Mammary epithelial cell (primary cell): ENCODE measurements at regions of chr3 and their contacts with region 1.

Region 1: GRCh38 chr3:99114565-99115291 is 213.2 kb upstream of the DCBLD2 start:
- DNase-seq: peak; percentile 60
- H3K4me3 ChIP-seq: no peak overlapping the region
- H3K27ac ChIP-seq: no peak overlapping the region
- H3K4me1 ChIP-seq: peaks cover 5% of the 10 kb centered on the region
- H3K27me3 ChIP-seq: no peaks in the 10 kb centered on the region
- CTCF ChIP-seq: peak; percentile 94 to 96

Region 2: GRCh38 chr3:99172736-99173657 is 58.3 kb after region 1 on chr3:
- CTCF ChIA-PET with region 1: no interaction called
- dilution Hi-C with region 1: no loop called
- in situ Hi-C with region 1: no loop called
- intact Hi-C with region 1: loop called (anchors 1 kb)
- DNase-seq: peak; percentile 60
- H3K4me3 ChIP-seq: no peak overlapping the region
- H3K27ac ChIP-seq: no peak overlapping the region
- H3K4me1 ChIP-seq: no peaks in the 10 kb centered on the region
- H3K27me3 ChIP-seq: no peaks in the 10 kb centered on the region
- CTCF ChIP-seq: peak; percentile 82 to 84

Region 3: GRCh38 chr3:99532246-99532645 is 417.5 kb after region 1 on chr3:
- CTCF ChIA-PET with region 1: no interaction called
- dilution Hi-C with region 1: no loop called
- in situ Hi-C with region 1: no loop called
- intact Hi-C with region 1: loop called (anchors 1 kb)
- DNase-seq: peak; percentile 54
- H3K4me3 ChIP-seq: no peak overlapping the region
- H3K27ac ChIP-seq: no peak overlapping the region
- H3K4me1 ChIP-seq: peaks cover 12% of the 10 kb centered on the region
- H3K27me3 ChIP-seq: no peaks in the 10 kb centered on the region
- CTCF ChIP-seq: peak; percentile 60 to 86

Region 4: GRCh38 chr3:99638167-99638948 is 523.6 kb after region 1 on chr3 and contains the start of gene COL8A1:
- CTCF ChIA-PET with region 1: no interaction called
- dilution Hi-C with region 1: no loop called
- in situ Hi-C with region 1: no loop called
- intact Hi-C with region 1: loop called (anchors 2 kb)
- DNase-seq: peak; percentile 83
- H3K4me3 ChIP-seq: peak within 1 kb of the TSS; percentile 48 to 71 (median 67)
- H3K27ac ChIP-seq: peak within 1 kb of the TSS; percentile 84
- H3K4me1 ChIP-seq: peaks cover 28% of the 10 kb centered on the region
- H3K27me3 ChIP-seq: no peaks in the 10 kb centered on the region
- CTCF ChIP-seq: no peak
- total RNA-seq, gene COL8A1: 11.9 to 73.2 TPM

Region 5: GRCh38 chr3:99686955-99687612 is 572.4 kb after region 1 on chr3:
- CTCF ChIA-PET with region 1: no interaction called
- dilution Hi-C with region 1: no loop called
- in situ Hi-C with region 1: no loop called
- intact Hi-C with region 1: loop called (anchors 1 kb)
- DNase-seq: peak; percentile 42
- H3K4me3 ChIP-seq: no peak overlapping the region
- H3K27ac ChIP-seq: no peak overlapping the region
- H3K4me1 ChIP-seq: no peaks in the 10 kb centered on the region
- H3K27me3 ChIP-seq: no peaks in the 10 kb centered on the region
- CTCF ChIP-seq: peak; percentile 73 to 84

Region 6: DNA sequence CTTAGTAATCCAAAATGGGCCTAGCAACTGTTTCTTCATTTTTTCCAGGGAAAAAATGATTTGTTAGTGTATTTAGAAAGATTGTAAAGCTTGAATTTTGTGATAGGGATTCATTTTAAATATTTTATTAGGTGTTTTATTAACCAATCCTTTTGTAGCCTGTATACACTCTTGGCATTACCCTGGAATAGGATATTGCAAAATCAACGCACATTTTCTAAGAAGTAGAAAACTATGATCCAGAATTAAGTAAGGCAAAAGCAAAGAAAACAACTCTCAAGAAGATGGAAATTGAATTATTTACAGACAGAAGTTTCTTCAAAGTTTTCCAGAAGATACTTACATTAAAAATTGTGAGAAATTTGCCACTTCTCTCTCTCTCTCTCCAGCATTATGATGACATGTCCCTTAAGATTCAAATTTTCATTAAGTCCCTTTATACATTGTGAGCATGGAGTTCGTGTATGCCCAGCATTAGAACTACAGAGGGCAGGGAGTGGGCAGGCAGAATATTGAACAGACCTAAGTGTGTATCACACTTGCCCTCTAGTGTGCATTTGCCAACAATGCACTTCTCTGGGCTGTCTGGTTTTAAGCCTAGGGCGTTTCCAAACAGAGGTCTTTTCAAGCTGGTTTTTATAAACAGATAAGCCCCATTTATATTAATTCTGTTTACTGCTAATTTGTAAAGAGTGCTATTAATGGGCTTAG is 674.4 kb after region 1 on chr3:
- CTCF ChIA-PET with region 1: no interaction called
- dilution Hi-C with region 1: no loop called
- in situ Hi-C with region 1: no loop called
- intact Hi-C with region 1: loop called (anchors 1 kb)
- DNase-seq: peak; percentile 44
- H3K4me3 ChIP-seq: no peak overlapping the region
- H3K27ac ChIP-seq: no peak overlapping the region
- H3K4me1 ChIP-seq: no peaks in the 10 kb centered on the region
- H3K27me3 ChIP-seq: no peaks in the 10 kb centered on the region
- CTCF ChIP-seq: peak; percentile 79 to 82

Region 7: DNA sequence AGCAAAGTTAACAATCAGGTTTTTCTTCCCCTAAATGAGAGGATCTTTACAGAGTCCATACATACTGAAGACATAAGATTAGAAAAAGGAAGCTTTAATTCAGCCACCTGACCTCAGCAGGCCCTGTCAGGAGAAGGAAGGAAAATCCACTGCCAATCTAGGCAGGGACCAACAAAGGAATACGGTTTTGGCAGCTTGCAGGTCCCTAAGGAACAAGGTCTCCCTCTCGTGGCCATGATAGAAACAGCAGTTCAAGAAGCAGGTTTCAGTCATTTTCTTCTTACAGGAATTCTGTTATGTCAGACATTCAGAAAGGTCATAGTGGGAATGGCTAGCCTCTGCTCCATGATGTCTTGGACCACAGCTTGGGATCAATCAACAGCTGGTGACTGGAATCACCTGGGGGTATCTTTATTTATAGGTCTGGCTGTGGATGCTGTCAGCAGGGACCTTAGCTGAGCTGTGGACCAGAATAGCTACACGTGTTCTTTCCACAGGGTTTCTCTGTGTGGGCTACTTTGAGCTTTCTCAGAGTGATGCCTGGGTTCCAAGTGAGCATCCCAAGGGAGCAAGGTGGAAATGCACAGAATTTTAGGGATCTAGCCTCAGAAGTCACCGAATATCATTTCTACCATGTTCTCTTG is 693.5 kb after region 1 on chr3:
- CTCF ChIA-PET with region 1: no interaction called
- dilution Hi-C with region 1: no loop called
- in situ Hi-C with region 1: no loop called
- intact Hi-C with region 1: loop called (anchors 5 kb)
- DNase-seq: peak; percentile 59
- H3K4me3 ChIP-seq: no peak overlapping the region
- H3K27ac ChIP-seq: no peak overlapping the region
- H3K4me1 ChIP-seq: no peaks in the 10 kb centered on the region
- H3K27me3 ChIP-seq: no peaks in the 10 kb centered on the region
- CTCF ChIP-seq: peak; percentile 85 to 92